Sciatic nerve (tissue), 2 donors: ENCODE measurements at regions of chr10 and their contacts with region 1.

Region 1: GRCh38 chr10:97869091-97870042 is 19.7 kb downstream of the GOLGA7B start:
- DNase-seq: peak; percentile 88
- ATAC-seq: peak; percentile 94

Region 2: GRCh38 chr10:97759158-97759887 is 110.0 kb before region 1 on chr10:
- intact Hi-C with region 1: loop called (anchors 5 kb)
- DNase-seq: peak; percentile 89
- ATAC-seq: peak; percentile 83

Region 3: GRCh38 chr10:97903128-97904017 is 34.0 kb after region 1 on chr10:
- intact Hi-C with region 1: no loop called
- DNase-seq: no peak
- ATAC-seq: peak; percentile 36

Region 4: DNA sequence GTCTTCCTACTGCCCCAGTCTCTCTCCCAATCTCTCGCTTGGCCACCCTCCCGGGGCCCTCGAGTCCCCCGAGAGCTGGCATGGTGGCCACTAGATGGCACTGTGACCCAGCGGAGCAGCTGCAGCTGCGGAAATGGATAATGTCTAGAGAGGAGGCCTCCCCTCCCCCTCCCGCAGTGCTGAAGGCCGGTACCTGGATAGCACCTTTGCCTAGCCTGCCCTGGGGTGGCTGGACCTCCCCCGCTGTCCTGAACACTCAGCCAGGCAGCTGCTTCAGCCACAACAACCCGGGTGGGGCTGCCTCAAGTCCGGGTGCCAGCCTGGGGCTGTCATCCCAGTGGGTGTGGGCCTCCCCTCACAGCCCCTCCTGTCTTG is 45.5 kb after region 1 on chr10:
- intact Hi-C with region 1: no loop called
- DNase-seq: peak; percentile 88
- ATAC-seq: peak; percentile 82